ENCODE measurements at regions of chr4 and their contacts with region 1.

Region 1: GRCh38 chr4:70704331-70705145 is 16.2 kb downstream of the UTP3 start:
- DNase-seq: peak; percentile 72
- H3K4me3 Mint-ChIP-seq: peak overlapping the region; percentile 93
- H3K27ac Mint-ChIP-seq: peak overlapping the region; percentile 84
- H3K4me1 Mint-ChIP-seq: peaks cover 11% of the 10 kb centered on the region
- H3K27me3 Mint-ChIP-seq: no peaks in the 10 kb centered on the region
- CTCF ChIP-seq: peak; percentile 19

Region 2: GRCh38 chr4:70651864-70652506 is 52.6 kb before region 1 on chr4:
- CTCF ChIA-PET with region 1: interaction called, 9 read pairs
- POLR2A ChIA-PET with region 1: interaction called, 4 read pairs
- intact Hi-C with region 1: loop called (anchors 5 kb)
- DNase-seq: peak; percentile 40
- H3K4me3 Mint-ChIP-seq: no peak overlapping the region
- H3K27ac Mint-ChIP-seq: no peak overlapping the region
- H3K4me1 Mint-ChIP-seq: no peaks in the 10 kb centered on the region
- H3K27me3 Mint-ChIP-seq: peaks cover 12% of the 10 kb centered on the region
- CTCF ChIP-seq: peak; percentile 69

Region 3: GRCh38 chr4:70687821-70688794 is 16.4 kb before region 1 on chr4 and contains the start of gene UTP3:
- CTCF ChIA-PET with region 1: interaction called, 37 read pairs
- POLR2A ChIA-PET with region 1: interaction called, 278 read pairs
- intact Hi-C with region 1: loop called (anchors 2 kb)
- DNase-seq: peak; percentile 98
- H3K4me3 Mint-ChIP-seq: peak within 1 kb of the TSS; percentile 98
- H3K27ac Mint-ChIP-seq: peak within 1 kb of the TSS; percentile 96
- H3K4me1 Mint-ChIP-seq: peaks cover 19% of the 10 kb centered on the region
- H3K27me3 Mint-ChIP-seq: no peaks in the 10 kb centered on the region
- CTCF ChIP-seq: peak; percentile 92
- total RNA-seq, gene UTP3: 45.4 and 47.5 TPM in 2 replicates

Region 4: GRCh38 chr4:70734168-70734954 is 29.8 kb after region 1 on chr4:
- CTCF ChIA-PET with region 1: interaction called, 49 read pairs
- POLR2A ChIA-PET with region 1: interaction called, 170 read pairs
- intact Hi-C with region 1: loop called (anchors 2 kb)
- DNase-seq: peak; percentile 60
- H3K4me3 Mint-ChIP-seq: peak overlapping the region; percentile 79
- H3K27ac Mint-ChIP-seq: peak overlapping the region; percentile 89
- H3K4me1 Mint-ChIP-seq: peaks cover 14% of the 10 kb centered on the region
- H3K27me3 Mint-ChIP-seq: no peaks in the 10 kb centered on the region
- CTCF ChIP-seq: no peak

Region 5: DNA sequence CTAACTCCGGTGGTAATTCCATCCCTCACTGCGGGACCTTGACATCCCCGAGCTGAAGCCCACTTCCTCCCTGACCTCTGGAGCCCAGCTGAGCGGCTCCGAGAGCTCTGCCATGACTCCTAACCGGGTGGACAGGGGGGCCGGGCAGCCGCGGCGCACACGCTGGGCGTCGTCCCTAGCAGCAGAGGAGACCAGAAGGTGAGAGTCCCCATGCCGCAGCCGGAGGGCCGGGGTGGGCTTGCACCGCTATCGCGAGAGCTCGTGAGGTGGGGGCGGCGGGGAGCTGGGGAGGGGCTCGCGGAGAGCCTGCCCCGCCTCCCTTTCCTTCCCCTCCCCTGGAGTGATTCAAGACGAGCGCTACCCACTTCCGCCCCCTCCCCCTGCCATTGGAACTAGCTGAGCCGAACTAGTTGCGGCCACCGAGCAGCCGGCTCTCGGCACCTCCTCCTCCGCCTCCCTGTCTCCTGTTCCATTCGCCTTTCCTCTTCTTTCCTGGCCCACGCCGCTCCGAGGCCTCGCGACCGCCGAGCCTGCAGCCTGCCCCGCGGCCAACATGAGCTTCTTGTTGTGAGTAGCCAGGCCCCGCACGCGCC is 197.5 kb after region 1 on chr4 and contains the start of gene MOB1B:
- CTCF ChIA-PET with region 1: no interaction called
- POLR2A ChIA-PET with region 1: interaction called, 8 read pairs
- intact Hi-C with region 1: loop called (anchors 5 kb)
- DNase-seq: peak; percentile 82
- H3K4me3 Mint-ChIP-seq: peak within 1 kb of the TSS; percentile 85
- H3K27ac Mint-ChIP-seq: peak within 1 kb of the TSS; percentile 68
- H3K4me1 Mint-ChIP-seq: peaks cover 9% of the 10 kb centered on the region
- H3K27me3 Mint-ChIP-seq: no peaks in the 10 kb centered on the region
- CTCF ChIP-seq: peak; percentile 35
- total RNA-seq, gene MOB1B: 16.1 and 19.9 TPM in 2 replicates